CD8-positive, alpha-beta memory T cell (primary cell): ENCODE measurements at regions of chr19 and their contacts with region 1.

Region 1: GRCh38 chr19:55339048-55339888 is at the start of gene KMT5C:
- DNase-seq: peak; percentile 100
- H3K4me3 ChIP-seq: peak within 1 kb of the TSS; percentile 77
- H3K4me3 Mint-ChIP-seq: peak within 1 kb of the TSS; percentile 89 to 97 (median 90)
- H3K27ac ChIP-seq: peak within 1 kb of the TSS; percentile 100
- H3K27ac Mint-ChIP-seq: peak within 1 kb of the TSS; percentile 98 to 100 (median 100)
- H3K4me1 ChIP-seq: peaks cover 24% of the 10 kb centered on the region
- H3K4me1 Mint-ChIP-seq: peaks cover 21 to 29% (median 27%) of the 10 kb centered on the region in 3 donors
- H3K27me3 ChIP-seq: no peaks in the 10 kb centered on the region
- H3K27me3 Mint-ChIP-seq: peaks cover 11 to 15% of the 10 kb centered on the region in 2 donors
- total RNA-seq, gene KMT5C: 14.6 to 15.0 TPM

Region 2: GRCh38 chr19:55258828-55259539 is 80.3 kb before region 1 on chr19 and contains the start of gene PPP6R1:
- CTCF ChIA-PET with region 1: interaction called, 10 read pairs
- POLR2A ChIA-PET with region 1: interaction called, 17 read pairs
- DNase-seq: peak; percentile 91 to 97 (median 95)
- H3K4me3 ChIP-seq: peak within 1 kb of the TSS; percentile 89
- H3K4me3 Mint-ChIP-seq: peak within 1 kb of the TSS; percentile 95 to 98 (median 98)
- H3K27ac ChIP-seq: peak within 1 kb of the TSS; percentile 91
- H3K27ac Mint-ChIP-seq: peak within 1 kb of the TSS; percentile 98 to 99 (median 98)
- H3K4me1 ChIP-seq: peaks cover 38% of the 10 kb centered on the region
- H3K4me1 Mint-ChIP-seq: peaks cover 43 to 47% (median 43%) of the 10 kb centered on the region in 3 donors
- H3K27me3 ChIP-seq: no peaks in the 10 kb centered on the region
- H3K27me3 Mint-ChIP-seq: no peaks in the 10 kb centered on the region
- total RNA-seq, gene PPP6R1: 216 to 225 TPM

Region 3: GRCh38 chr19:55301459-55302317 is 37.6 kb before region 1 on chr19:
- CTCF ChIA-PET with region 1: interaction called, 28 read pairs
- POLR2A ChIA-PET with region 1: interaction called, 3 read pairs
- DNase-seq: peak; percentile 88 to 95 (median 94)
- H3K4me3 ChIP-seq: peak overlapping the region; percentile 60
- H3K4me3 Mint-ChIP-seq: peak overlapping the region; percentile 50 to 92 (median 86)
- H3K27ac ChIP-seq: peak overlapping the region; percentile 35
- H3K27ac Mint-ChIP-seq: peak overlapping the region; percentile 80 to 98 (median 92)
- H3K4me1 ChIP-seq: peaks cover 14% of the 10 kb centered on the region
- H3K4me1 Mint-ChIP-seq: peaks cover 13 to 19% (median 14%) of the 10 kb centered on the region in 3 donors
- H3K27me3 ChIP-seq: no peaks in the 10 kb centered on the region
- H3K27me3 Mint-ChIP-seq: peaks cover 0 to 2% of the 10 kb centered on the region in 2 donors

Region 4: DNA sequence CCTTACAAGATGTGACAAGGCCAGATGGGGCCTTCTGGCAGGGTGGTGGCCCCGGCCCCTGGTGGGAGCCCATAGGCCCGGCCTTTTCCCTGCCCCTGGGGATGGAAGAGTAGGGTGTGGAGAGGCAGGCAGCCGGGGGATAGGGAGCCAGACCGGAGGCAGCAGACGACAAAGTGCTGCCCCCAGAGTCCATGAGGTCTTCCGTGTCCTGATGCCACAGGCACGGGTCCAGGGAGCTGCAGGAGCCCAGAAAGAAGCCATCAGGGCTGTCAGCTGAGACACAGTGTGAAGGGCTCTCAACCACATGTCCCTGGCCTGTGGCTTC is 20.3 kb after region 1 on chr19:
- CTCF ChIA-PET with region 1: no interaction called
- POLR2A ChIA-PET with region 1: no interaction called
- DNase-seq: no peak
- H3K4me3 ChIP-seq: no peak overlapping the region
- H3K4me3 Mint-ChIP-seq: no peak overlapping the region
- H3K27ac ChIP-seq: no peak overlapping the region
- H3K27ac Mint-ChIP-seq: no peak overlapping the region
- H3K4me1 ChIP-seq: no peaks in the 10 kb centered on the region
- H3K4me1 Mint-ChIP-seq: peaks cover 0 to 3% (median 0%) of the 10 kb centered on the region in 3 donors
- H3K27me3 ChIP-seq: no peaks in the 10 kb centered on the region
- H3K27me3 Mint-ChIP-seq: peaks cover 0 to 12% of the 10 kb centered on the region in 2 donors

Region 5: GRCh38 chr19:55385740-55386529 is 46.7 kb after region 1 on chr19 and contains the start of gene RPL28:
- CTCF ChIA-PET with region 1: interaction called, 14 read pairs
- POLR2A ChIA-PET with region 1: interaction called, 20 read pairs
- DNase-seq: peak; percentile 96 to 99 (median 98)
- H3K4me3 ChIP-seq: peak within 1 kb of the TSS; percentile 99
- H3K4me3 Mint-ChIP-seq: peak within 1 kb of the TSS; percentile 97 to 100 (median 99)
- H3K27ac ChIP-seq: peak within 1 kb of the TSS; percentile 99
- H3K27ac Mint-ChIP-seq: peak within 1 kb of the TSS; percentile 97 to 100 (median 99)
- H3K4me1 ChIP-seq: peaks cover 57% of the 10 kb centered on the region
- H3K4me1 Mint-ChIP-seq: peaks cover 65 to 82% (median 69%) of the 10 kb centered on the region in 3 donors
- H3K27me3 ChIP-seq: no peaks in the 10 kb centered on the region
- H3K27me3 Mint-ChIP-seq: peaks cover 0 to 10% of the 10 kb centered on the region in 2 donors
- total RNA-seq, gene RPL28: 2,376 to 2,381 TPM

Region 6: GRCh38 chr19:55407800-55408532 is 68.7 kb after region 1 on chr19:
- CTCF ChIA-PET with region 1: no interaction called
- POLR2A ChIA-PET with region 1: interaction called, 18 read pairs
- DNase-seq: peak; percentile 96 to 98 (median 98)
- H3K4me3 ChIP-seq: peak overlapping the region; percentile 79
- H3K4me3 Mint-ChIP-seq: peak overlapping the region; percentile 89 to 96 (median 94)
- H3K27ac ChIP-seq: peak overlapping the region; percentile 99
- H3K27ac Mint-ChIP-seq: peak overlapping the region; percentile 98 to 100 (median 99)
- H3K4me1 ChIP-seq: peaks cover 22% of the 10 kb centered on the region
- H3K4me1 Mint-ChIP-seq: peaks cover 29 to 41% (median 38%) of the 10 kb centered on the region in 3 donors
- H3K27me3 ChIP-seq: no peaks in the 10 kb centered on the region
- H3K27me3 Mint-ChIP-seq: peaks cover 0 to 2% of the 10 kb centered on the region in 2 donors

Region 7: GRCh38 chr19:55452749-55453346 is 113.6 kb after region 1 on chr19:
- CTCF ChIA-PET with region 1: no interaction called
- POLR2A ChIA-PET with region 1: no interaction called
- DNase-seq: peak in 2 of 5 donors; percentile 21 to 40
- H3K4me3 ChIP-seq: no peak overlapping the region
- H3K4me3 Mint-ChIP-seq: peak overlapping the region in 2 of 7 donors; percentile 32 to 57
- H3K27ac ChIP-seq: no peak overlapping the region
- H3K27ac Mint-ChIP-seq: peak overlapping the region in 1 of 8 donors; percentile 78
- H3K4me1 ChIP-seq: peaks cover 10% of the 10 kb centered on the region
- H3K4me1 Mint-ChIP-seq: peaks cover 5 to 30% (median 9%) of the 10 kb centered on the region in 3 donors
- H3K27me3 ChIP-seq: peaks cover 11% of the 10 kb centered on the region
- H3K27me3 Mint-ChIP-seq: peaks cover 20 to 32% of the 10 kb centered on the region in 2 donors

Region 8: GRCh38 chr19:55476100-55476775 is 137.0 kb after region 1 on chr19 and contains the start of gene ZNF628:
- CTCF ChIA-PET with region 1: no interaction called
- POLR2A ChIA-PET with region 1: interaction called, 11 read pairs
- DNase-seq: peak; percentile 95 to 98 (median 97)
- H3K4me3 ChIP-seq: peak within 1 kb of the TSS; percentile 92
- H3K4me3 Mint-ChIP-seq: peak within 1 kb of the TSS; percentile 89 to 96 (median 90)
- H3K27ac ChIP-seq: peak within 1 kb of the TSS; percentile 72
- H3K27ac Mint-ChIP-seq: peak within 1 kb of the TSS; percentile 92 to 99 (median 94)
- H3K4me1 ChIP-seq: peaks cover 17% of the 10 kb centered on the region
- H3K4me1 Mint-ChIP-seq: peaks cover 17 to 42% (median 32%) of the 10 kb centered on the region in 3 donors
- H3K27me3 ChIP-seq: no peaks in the 10 kb centered on the region
- H3K27me3 Mint-ChIP-seq: no peaks in the 10 kb centered on the region
- total RNA-seq, gene ZNF628: 8.3 to 8.7 TPM